ENCODE measurements at regions of chr5 and their contacts with region 1.

Region 1: DNA sequence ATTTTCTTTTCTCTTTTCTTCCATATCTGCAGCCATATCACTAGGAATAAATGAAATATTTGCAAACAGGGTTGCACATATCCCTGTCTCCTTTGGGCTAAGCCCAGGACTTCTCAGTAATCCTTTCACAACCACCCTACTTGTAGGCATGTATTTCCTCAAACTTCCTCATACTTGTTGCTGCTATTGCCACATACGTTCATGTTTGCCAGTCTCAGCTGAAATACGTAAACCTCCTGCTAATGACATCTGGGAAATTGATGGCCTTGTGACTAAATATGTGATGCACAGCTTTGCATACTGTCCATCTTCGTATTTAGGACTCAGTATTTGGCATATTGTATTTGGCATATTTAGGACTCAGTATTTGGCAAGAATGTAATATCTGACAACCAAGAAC is 224.6 kb downstream of the PLK2 start:
- DNase-seq: peak; percentile 87
- H3K4me3 Mint-ChIP-seq: no peak overlapping the region
- H3K27ac Mint-ChIP-seq: peak overlapping the region; percentile 69
- H3K4me1 Mint-ChIP-seq: peaks cover 25% of the 10 kb centered on the region
- H3K27me3 Mint-ChIP-seq: no peaks in the 10 kb centered on the region
- CTCF ChIP-seq: no peak

Region 2: GRCh38 chr5:58224661-58225060 is 10.6 kb before region 1 on chr5:
- CTCF ChIA-PET with region 1: no interaction called
- POLR2A ChIA-PET with region 1: interaction called, 12 read pairs
- intact Hi-C with region 1: no loop called
- DNase-seq: no peak
- H3K4me3 Mint-ChIP-seq: no peak overlapping the region
- H3K27ac Mint-ChIP-seq: no peak overlapping the region
- H3K4me1 Mint-ChIP-seq: peaks cover 5% of the 10 kb centered on the region
- H3K27me3 Mint-ChIP-seq: no peaks in the 10 kb centered on the region
- CTCF ChIP-seq: no peak

Region 3: GRCh38 chr5:58259685-58260152 is 24.4 kb after region 1 on chr5:
- CTCF ChIA-PET with region 1: interaction called, 3 read pairs
- POLR2A ChIA-PET with region 1: interaction called, 18 read pairs
- intact Hi-C with region 1: no loop called
- DNase-seq: peak; percentile 80
- H3K4me3 Mint-ChIP-seq: peak overlapping the region; percentile 57
- H3K27ac Mint-ChIP-seq: peak overlapping the region; percentile 74
- H3K4me1 Mint-ChIP-seq: peaks cover 10% of the 10 kb centered on the region
- H3K27me3 Mint-ChIP-seq: no peaks in the 10 kb centered on the region
- CTCF ChIP-seq: no peak

Region 4: DNA sequence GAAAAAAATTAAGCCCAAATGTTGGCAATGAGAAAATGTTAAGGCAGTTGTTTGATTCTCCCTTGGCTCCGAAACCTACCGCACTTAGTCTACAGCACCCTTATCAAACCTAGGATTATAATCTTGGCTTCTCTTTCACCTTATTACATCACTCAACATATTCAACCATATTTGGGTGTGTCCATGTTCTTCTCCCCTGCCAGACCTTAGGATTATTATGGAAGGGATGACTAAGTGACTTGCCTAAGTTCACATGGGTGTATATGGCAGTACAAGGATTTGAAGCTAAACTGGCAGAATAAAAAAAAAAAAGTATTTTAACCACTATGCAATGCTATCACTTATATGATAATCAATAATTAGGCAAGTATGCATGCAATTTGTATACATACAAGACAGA is 148.2 kb after region 1 on chr5:
- CTCF ChIA-PET with region 1: no interaction called
- POLR2A ChIA-PET with region 1: no interaction called
- intact Hi-C with region 1: no loop called
- DNase-seq: peak; percentile 35
- H3K4me3 Mint-ChIP-seq: no peak overlapping the region
- H3K27ac Mint-ChIP-seq: no peak overlapping the region
- H3K4me1 Mint-ChIP-seq: no peaks in the 10 kb centered on the region
- H3K27me3 Mint-ChIP-seq: no peaks in the 10 kb centered on the region
- CTCF ChIP-seq: no peak